MCF 10A (cell line): ENCODE measurements at regions of chr5 and their contacts with region 1.

Region 1: DNA sequence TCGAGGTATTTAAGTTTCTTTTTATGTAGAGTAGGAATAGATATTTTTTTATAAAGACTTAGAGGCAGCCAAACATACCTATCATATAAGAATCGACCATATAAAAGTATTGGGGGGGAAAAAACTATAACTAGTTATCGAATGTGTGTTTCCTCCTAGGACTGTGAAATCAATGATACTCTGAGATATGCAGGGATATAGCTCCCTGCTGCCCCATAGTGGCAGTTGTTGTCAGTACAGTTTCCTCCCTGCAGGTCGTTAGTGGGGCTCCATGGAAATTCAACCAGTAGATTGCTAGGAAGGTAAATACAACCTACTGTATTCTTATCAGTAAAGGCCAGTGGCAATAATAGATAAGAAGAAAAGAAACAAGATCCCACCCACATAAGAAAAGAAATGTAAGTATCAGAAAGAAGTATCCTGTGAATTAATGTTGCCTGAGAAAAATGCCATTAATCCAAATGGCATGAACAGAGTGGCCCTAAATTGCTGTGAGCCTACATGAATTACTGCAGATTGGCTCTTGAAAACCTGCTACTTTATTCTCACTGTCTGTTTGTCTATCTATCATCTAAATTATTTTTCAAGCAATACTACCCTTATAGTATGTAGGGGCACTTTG is 136.9 kb upstream of the FBN2 start:
- DNase-seq: peak; percentile 84
- H3K4me3 Mint-ChIP-seq: no peak overlapping the region
- H3K27ac Mint-ChIP-seq: no peak overlapping the region
- H3K4me1 Mint-ChIP-seq: no peaks in the 10 kb centered on the region
- H3K27me3 Mint-ChIP-seq: no peaks in the 10 kb centered on the region
- CTCF ChIP-seq: peak; percentile 81

Region 2: DNA sequence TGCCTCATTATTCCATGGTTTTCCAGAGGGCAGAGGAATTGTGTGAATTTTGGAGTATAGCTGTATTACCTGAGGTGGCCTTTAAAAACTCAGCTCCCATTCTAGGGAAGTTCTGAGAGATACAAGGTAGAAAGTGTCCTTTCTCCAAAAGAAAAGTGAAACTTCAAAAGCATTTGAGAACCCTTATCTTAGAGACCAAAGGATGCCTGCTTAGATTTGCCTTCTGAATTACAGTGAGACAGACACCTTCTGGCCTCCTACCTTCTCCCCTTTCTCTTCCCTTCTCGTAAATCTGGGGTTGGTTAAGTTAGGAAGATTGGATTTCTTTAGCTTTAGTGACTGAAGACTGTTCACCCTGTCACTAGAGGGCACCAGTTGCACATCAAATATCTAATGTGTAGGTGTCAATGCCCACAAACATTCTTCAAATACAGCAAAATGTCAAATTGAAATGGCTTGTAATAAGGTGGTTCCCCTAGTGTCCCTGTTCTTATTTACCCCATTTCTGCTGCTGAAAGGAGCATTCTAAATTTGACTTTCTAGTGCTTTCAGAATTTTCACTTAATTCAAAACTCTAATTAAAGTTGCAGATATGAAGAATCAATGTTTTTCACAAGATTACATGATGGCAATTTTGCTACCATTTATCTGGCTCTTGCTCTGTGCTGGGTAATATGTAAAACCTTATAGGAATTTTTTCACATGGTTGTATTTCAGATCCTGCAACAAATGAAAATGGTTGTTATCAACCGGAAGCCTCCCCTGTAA is 1110.8 kb before region 1 on chr5:
- CTCF ChIA-PET with region 1: no interaction called
- POLR2A ChIA-PET with region 1: no interaction called
- intact Hi-C with region 1: loop called (anchors 10 kb)
- DNase-seq: peak; percentile 89
- H3K4me3 Mint-ChIP-seq: no peak overlapping the region
- H3K27ac Mint-ChIP-seq: no peak overlapping the region
- H3K4me1 Mint-ChIP-seq: peaks cover 5% of the 10 kb centered on the region
- H3K27me3 Mint-ChIP-seq: peaks cover 10% of the 10 kb centered on the region
- CTCF ChIP-seq: peak; percentile 77

Region 3: GRCh38 chr5:128111818-128112448 is 563.0 kb before region 1 on chr5:
- CTCF ChIA-PET with region 1: no interaction called
- POLR2A ChIA-PET with region 1: no interaction called
- intact Hi-C with region 1: no loop called
- DNase-seq: peak; percentile 17
- H3K4me3 Mint-ChIP-seq: no peak overlapping the region
- H3K27ac Mint-ChIP-seq: no peak overlapping the region
- H3K4me1 Mint-ChIP-seq: peaks cover 7% of the 10 kb centered on the region
- H3K27me3 Mint-ChIP-seq: no peaks in the 10 kb centered on the region
- CTCF ChIP-seq: no peak

Region 4: DNA sequence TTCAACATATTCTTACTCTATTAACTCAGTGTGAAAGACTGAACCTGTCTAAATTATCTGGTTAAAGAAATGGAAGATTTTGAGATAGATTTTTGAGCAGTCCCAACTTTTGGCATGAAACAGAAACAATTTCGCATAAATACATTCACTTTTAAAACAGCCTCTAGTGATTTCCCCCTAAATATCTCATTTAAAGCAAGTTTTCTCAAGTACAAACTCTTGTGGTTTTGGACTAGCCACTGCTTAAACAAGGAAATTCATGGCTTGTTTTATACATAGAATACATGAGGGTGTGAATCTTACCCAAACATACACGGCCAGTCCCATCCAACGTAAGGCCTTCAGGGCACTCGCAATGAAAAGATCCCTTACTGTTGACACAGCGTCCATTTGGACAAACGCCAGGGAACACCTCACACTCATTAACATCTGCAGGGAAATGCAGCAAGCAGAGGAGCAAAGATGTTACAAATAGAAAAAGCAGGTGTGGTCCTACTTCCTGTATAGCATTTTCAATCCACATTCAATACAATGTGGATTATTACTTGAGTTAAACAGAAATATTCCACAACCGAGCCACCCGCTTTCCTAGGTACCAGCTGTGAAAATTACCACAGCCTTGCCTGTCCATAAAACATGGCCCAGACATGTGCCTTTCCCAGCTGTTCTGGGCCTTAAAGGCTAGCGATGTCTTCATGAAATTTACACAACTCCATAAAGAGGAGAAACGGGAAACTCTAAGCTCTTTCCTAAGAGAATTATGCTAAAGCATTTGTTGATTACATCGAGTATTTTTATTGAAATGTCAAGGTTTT is 325.7 kb before region 1 on chr5:
- CTCF ChIA-PET with region 1: interaction called, 3 read pairs
- POLR2A ChIA-PET with region 1: interaction called, 3 read pairs
- intact Hi-C with region 1: loop called (anchors 5 kb)
- DNase-seq: peak; percentile 98
- H3K4me3 Mint-ChIP-seq: no peak overlapping the region
- H3K27ac Mint-ChIP-seq: peak overlapping the region; percentile 4
- H3K4me1 Mint-ChIP-seq: peaks cover 9% of the 10 kb centered on the region
- H3K27me3 Mint-ChIP-seq: no peaks in the 10 kb centered on the region
- CTCF ChIP-seq: no peak

Region 5: DNA sequence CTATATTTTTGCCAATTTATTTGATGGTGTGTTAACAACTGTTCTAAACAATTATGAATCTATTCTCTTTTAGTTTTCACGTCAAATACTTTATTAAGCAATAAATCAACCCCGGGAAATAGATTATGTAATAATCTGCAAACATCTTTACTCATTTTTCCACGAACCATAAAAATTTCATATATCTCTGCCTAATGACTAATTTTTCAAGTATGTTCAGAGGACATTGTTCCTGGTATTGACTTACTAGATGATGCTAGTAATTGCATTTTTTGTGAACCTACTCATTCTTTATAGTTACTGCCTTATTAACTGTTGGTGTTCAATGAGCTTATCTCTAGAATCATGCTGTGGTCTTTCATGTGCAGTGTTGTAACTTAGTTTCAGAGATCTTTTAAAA is 95.8 kb before region 1 on chr5:
- CTCF ChIA-PET with region 1: no interaction called
- POLR2A ChIA-PET with region 1: interaction called, 3 read pairs
- intact Hi-C with region 1: loop called (anchors 5 kb)
- DNase-seq: peak; percentile 70
- H3K4me3 Mint-ChIP-seq: no peak overlapping the region
- H3K27ac Mint-ChIP-seq: peak overlapping the region; percentile 73
- H3K4me1 Mint-ChIP-seq: peaks cover 26% of the 10 kb centered on the region
- H3K27me3 Mint-ChIP-seq: no peaks in the 10 kb centered on the region
- CTCF ChIP-seq: no peak

Region 6: GRCh38 chr5:128749136-128749898 is 74.4 kb after region 1 on chr5:
- CTCF ChIA-PET with region 1: no interaction called
- POLR2A ChIA-PET with region 1: no interaction called
- intact Hi-C with region 1: no loop called
- DNase-seq: no peak
- H3K4me3 Mint-ChIP-seq: no peak overlapping the region
- H3K27ac Mint-ChIP-seq: no peak overlapping the region
- H3K4me1 Mint-ChIP-seq: peaks cover 5% of the 10 kb centered on the region
- H3K27me3 Mint-ChIP-seq: peaks cover 50% of the 10 kb centered on the region
- CTCF ChIP-seq: no peak

Region 7: DNA sequence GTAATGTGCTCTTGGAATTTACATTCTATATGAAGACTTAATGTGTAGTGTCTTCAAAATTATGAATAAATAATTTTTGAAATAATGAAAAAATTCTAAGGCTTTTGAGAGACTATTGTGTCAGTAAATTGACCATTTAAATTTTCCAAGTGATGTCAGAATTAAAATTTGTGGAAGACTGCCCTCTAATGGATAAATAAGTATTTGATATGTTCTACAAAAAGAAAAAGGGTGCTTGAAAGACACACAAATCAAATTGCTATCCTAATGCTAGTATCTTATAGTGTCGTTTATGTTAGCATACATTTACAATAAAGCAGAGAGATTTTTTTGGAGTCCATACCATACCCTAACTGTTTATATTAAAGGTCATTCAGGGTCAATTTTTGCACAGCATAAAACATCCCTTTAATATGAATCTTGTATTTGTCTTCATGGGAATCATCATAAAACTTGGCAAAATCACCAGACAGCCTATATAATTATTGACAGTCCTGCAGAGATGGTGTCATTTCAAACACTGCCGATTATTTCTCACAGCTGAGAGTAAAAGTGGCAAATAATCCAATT is 169.5 kb after region 1 on chr5:
- CTCF ChIA-PET with region 1: interaction called, 11 read pairs
- POLR2A ChIA-PET with region 1: no interaction called
- intact Hi-C with region 1: loop called (anchors 2 kb)
- DNase-seq: peak; percentile 46
- H3K4me3 Mint-ChIP-seq: no peak overlapping the region
- H3K27ac Mint-ChIP-seq: no peak overlapping the region
- H3K4me1 Mint-ChIP-seq: no peaks in the 10 kb centered on the region
- H3K27me3 Mint-ChIP-seq: no peaks in the 10 kb centered on the region
- CTCF ChIP-seq: peak; percentile 59